HEK293 (cell line): ENCODE measurements at regions of chr12 and their contacts with region 1.

Region 1: DNA sequence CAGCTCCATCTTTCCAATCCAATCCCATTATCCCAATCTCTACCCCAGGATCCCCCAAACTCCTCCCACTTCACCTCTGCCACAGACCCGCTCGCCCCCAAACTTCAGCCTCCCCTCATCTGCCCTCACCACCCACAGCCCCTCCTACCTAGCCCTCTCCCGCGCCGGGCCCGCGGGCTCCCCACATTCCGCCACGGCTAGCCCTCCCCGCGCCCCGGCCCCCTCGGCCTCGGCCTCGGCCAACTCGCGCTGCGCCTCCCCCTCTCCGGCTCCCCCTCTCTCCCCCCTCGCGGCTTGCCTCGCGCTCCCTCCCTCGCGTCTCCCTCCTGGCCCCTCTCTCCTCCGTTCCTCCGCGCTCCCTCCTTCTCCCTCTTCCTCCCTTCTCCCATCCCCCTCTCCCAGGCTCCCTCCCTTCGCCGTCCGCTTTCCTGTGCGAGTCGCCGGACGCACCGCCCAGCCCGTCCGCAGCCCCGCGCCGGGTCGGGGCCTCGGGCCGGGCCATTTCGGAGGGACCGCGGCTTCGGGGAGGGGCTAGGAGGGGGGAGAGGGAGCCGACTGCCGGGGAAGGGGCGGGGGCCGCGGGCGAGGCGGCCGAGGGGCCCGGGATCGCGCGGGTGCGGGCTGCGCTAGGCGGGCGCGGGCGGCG is at the start of gene ATN1:
- H3K4me3 ChIP-seq: peak within 1 kb of the TSS; percentile 74
- H3K27ac ChIP-seq: peak within 1 kb of the TSS; percentile 80
- H3K4me1 ChIP-seq: peaks cover 28% of the 10 kb centered on the region
- CTCF ChIP-seq: 0 out of 2 replicates have a peak, but pooled peaks have one; percentile 38

Region 2: DNA sequence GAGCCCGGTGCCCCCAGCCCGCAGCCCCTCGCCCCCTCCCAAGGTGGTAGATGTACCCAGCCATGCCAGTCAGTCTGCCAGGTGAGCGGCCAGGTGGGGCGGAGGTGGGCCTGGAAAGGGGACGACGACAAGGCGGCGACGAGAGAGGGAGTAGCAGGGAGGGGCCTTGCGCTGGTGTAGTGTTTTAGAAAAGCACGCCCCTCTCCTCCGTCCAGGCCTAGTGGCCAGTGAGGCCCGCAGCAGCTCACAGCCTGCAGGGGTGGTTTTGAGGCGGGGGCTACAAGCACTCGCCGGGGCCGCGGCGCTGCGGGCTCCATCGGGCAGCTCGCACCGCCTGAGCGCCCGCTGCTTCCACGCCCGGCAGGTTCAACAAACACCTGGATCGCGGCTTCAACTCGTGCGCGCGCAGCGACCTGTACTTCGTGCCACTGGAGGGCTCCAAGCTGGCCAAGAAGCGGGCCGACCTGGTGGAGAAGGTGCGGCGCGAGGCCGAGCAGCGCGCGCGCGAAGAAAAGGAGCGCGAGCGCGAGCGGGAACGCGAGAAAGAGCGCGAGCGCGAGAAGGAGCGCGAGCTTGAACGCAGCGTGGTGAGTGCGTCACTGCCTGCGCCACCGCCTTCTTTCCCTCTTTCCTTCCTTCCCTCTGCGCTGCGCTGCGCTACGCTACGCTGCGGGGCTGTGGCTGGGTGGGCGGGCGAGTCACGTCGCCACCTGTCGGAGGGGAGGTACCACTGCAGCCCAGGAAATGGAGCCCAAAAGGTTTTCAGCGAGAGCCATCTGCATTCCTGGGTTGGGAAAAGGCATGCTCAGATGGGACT is 10.2 kb after region 1 on chr12:
- CTCF ChIA-PET with region 1: interaction called, 53 read pairs
- POLR2A ChIA-PET with region 1: interaction called, 99 read pairs
- H3K4me3 ChIP-seq: peak overlapping the region; percentile 54
- H3K27ac ChIP-seq: peak overlapping the region; percentile 95
- H3K4me1 ChIP-seq: peaks cover 6% of the 10 kb centered on the region
- CTCF ChIP-seq: peak; percentile 98